OCI-LY7 (cell line): ENCODE measurements at regions of chr7 and their contacts with region 1.

Region 1: GRCh38 chr7:64562626-64563275 is at the start of gene ZNF680:
- DNase-seq: peak; percentile 97
- H3K4me3 ChIP-seq: peak within 1 kb of the TSS; percentile 77
- H3K27ac ChIP-seq: peak within 1 kb of the TSS; percentile 86
- H3K4me1 ChIP-seq: peaks cover 47% of the 10 kb centered on the region
- CTCF ChIP-seq: no peak
- total RNA-seq, gene ZNF680: 55.9 and 62.6 TPM in 2 replicates

Region 2: GRCh38 chr7:64241162-64241561 is 321.6 kb before region 1 on chr7:
- CTCF ChIA-PET with region 1: no interaction called
- POLR2A ChIA-PET with region 1: no interaction called
- intact Hi-C with region 1: no loop called
- DNase-seq: no peak
- H3K4me3 ChIP-seq: no peak overlapping the region
- H3K27ac ChIP-seq: no peak overlapping the region
- H3K4me1 ChIP-seq: no peaks in the 10 kb centered on the region
- CTCF ChIP-seq: no peak

Region 3: DNA sequence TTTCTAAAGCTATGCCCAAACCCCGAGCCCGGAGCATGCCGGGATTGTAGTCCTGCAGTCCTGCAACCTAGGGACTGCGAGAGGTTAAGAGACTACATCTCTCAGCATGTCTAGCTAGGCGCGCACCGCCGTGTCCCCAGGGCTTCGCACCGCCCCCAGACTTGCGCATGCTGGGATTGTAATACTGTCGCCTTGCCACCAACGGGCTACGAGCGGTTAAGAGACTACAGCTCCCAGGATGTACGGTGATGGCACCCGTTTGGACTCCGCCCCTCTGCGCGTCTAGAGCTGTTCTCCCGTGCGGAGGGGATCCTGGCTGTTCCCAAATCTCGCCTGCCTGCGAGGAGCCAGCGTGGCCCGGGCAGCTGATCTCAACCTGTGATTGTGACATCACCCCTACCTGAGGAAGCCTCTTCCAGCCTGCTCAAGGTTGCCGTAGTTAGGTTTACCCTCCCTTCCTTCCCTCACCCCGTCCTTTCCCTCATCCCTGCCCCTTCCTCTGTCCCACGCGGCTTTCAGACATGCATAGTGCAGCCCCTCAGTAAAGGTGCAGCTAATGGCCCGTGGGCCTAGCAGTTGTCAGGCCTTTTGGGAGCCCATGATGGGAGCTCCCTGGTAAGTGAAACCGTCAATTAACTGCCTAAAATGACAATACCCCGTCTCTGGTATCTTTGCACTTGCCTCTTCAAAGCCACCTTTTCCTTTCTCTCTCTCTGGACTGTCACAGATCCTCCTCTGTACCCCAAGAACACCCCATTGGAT is 255.3 kb before region 1 on chr7:
- CTCF ChIA-PET with region 1: no interaction called
- POLR2A ChIA-PET with region 1: interaction called, 13 read pairs
- intact Hi-C with region 1: loop called (anchors 2 kb)
- DNase-seq: peak; percentile 98
- H3K4me3 ChIP-seq: peak overlapping the region; percentile 91
- H3K27ac ChIP-seq: peak overlapping the region; percentile 91
- H3K4me1 ChIP-seq: peaks cover 38% of the 10 kb centered on the region
- CTCF ChIP-seq: no peak

Region 4: DNA sequence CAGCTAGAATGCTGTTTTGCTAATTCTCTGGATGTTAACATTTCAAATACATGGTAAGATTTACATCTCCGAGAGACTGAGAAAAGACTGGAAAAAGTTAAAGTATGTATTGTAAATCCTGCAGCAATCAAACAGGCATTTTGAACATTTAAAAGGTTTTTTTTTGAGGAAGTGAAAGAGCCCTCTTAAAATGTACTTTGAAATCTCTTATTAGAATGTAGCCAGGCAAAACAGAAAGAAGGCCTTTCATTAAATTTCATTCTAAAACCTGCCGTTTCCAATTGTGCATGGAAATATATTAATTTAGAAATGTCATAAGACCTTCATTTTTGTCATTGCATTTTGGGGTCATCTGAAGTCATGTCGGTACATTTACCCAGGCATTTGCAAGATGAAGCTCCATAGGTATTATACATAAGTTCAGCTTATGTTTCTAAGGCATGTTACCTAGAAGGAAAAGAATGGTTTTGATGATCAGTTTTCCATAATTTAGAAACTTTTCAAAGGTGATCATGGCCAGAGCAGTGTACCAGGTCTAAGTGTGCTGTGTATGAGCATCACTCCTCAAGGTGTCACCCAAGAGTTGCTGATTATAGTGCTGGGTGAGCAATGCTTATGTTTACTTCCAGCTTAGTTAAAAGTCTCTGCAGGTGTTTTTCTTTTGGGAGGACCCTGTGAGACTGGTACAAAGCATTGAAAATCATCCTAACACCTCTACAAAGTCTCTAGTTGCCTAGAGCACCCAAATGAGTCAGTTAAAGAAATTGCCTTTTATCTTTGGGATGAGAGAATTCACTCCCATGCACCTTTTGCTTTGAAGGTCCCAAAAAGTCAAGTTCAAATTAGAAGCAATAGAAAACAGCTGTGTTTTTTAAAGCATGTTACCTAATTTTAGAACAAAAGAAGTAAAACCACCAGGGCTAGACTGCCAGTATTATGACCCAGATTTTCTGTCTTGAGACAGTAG is 241.9 kb before region 1 on chr7:
- CTCF ChIA-PET with region 1: no interaction called
- POLR2A ChIA-PET with region 1: interaction called, 13 read pairs
- intact Hi-C with region 1: loop called (anchors 5 kb)
- DNase-seq: peak; percentile 85
- H3K4me3 ChIP-seq: peak overlapping the region; percentile 58
- H3K27ac ChIP-seq: peak overlapping the region; percentile 89
- H3K4me1 ChIP-seq: peaks cover 68% of the 10 kb centered on the region
- CTCF ChIP-seq: peak; percentile 79

Region 5: DNA sequence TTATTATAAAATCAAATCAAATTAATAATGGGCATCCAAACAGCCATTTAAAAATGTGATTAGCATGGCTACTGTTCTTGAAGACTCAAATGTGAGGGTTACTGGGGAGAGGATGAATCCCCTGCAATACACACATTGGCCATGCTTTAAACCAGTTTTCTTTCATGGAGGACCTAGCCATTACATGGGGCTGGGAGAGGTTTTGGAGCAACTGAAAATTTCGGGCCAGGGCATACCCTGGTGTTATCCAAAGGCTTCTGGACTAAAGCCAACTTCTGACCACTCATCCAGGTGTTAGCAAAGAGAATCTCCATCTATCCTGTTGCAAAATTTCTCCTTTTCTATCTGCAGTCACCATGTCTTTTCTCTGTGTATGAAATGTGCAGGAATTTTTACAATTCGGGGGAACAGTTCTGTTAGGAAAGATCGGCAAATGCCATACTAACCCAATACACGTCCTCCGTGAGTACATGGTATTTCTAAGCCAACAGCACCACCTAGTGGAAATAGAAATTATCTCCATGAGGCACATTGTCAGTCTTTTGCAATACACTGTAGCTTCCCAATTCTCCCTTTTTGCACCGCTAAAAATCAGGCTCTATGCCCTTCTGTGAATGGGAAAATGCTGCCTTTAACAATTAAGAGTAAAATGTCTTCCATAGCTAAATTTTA is 56.2 kb after region 1 on chr7:
- CTCF ChIA-PET with region 1: no interaction called
- POLR2A ChIA-PET with region 1: interaction called, 7 read pairs
- intact Hi-C with region 1: loop called (anchors 5 kb)
- DNase-seq: peak; percentile 81
- H3K4me3 ChIP-seq: no peak overlapping the region
- H3K27ac ChIP-seq: no peak overlapping the region
- H3K4me1 ChIP-seq: no peaks in the 10 kb centered on the region
- CTCF ChIP-seq: peak; percentile 92

Region 6: GRCh38 chr7:64902806-64903721 is 340.3 kb after region 1 on chr7 and contains the start of gene ZNF273:
- CTCF ChIA-PET with region 1: no interaction called
- POLR2A ChIA-PET with region 1: no interaction called
- intact Hi-C with region 1: loop called (anchors 5 kb)
- DNase-seq: peak; percentile 96
- H3K4me3 ChIP-seq: peak within 1 kb of the TSS; percentile 86
- H3K27ac ChIP-seq: peak within 1 kb of the TSS; percentile 54
- H3K4me1 ChIP-seq: peaks cover 49% of the 10 kb centered on the region
- CTCF ChIP-seq: no peak
- total RNA-seq, gene ZNF273: 19.0 and 22.8 TPM in 2 replicates